PC-9 (cell line): ENCODE measurements at regions of chr2 and their contacts with region 1.

Region 1: GRCh38 chr2:42132966-42133641 is 36.0 kb upstream of the EML4 start:
- DNase-seq: peak; percentile 92 to 98
- H3K4me3 ChIP-seq: peak overlapping the region; percentile 24; the same call in 1 of the 2 replicates
- H3K27ac ChIP-seq: peak overlapping the region; percentile 69
- H3K4me1 ChIP-seq: peaks cover 74% of the 10 kb centered on the region
- H3K27me3 ChIP-seq: no peaks in the 10 kb centered on the region
- CTCF ChIP-seq: no peak

Region 2: DNA sequence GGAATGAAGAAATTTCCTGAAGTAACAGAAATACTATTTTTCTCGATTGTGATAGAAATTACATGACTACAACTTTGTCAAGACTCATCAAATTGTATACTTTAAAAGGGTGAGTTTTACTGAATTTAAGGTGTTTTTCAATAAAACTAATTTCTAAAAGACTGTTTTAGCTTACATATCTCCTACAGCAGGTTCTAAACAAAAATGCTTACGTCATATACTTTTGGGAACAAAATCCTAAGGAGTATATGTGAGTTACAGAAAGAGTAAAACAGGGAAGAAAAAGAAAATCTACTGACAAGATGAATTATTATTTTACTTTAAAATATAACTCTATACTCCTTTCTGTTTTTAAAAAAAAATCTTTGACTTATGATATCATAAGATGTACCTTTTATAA is 745.6 kb before region 1 on chr2:
- CTCF ChIA-PET with region 1: no interaction called
- POLR2A ChIA-PET with region 1: no interaction called
- intact Hi-C with region 1: no loop called
- DNase-seq: no peak
- H3K4me3 ChIP-seq: no peak overlapping the region
- H3K27ac ChIP-seq: no peak overlapping the region
- H3K4me1 ChIP-seq: no peaks in the 10 kb centered on the region
- H3K27me3 ChIP-seq: no peaks in the 10 kb centered on the region
- CTCF ChIP-seq: no peak

Region 3: DNA sequence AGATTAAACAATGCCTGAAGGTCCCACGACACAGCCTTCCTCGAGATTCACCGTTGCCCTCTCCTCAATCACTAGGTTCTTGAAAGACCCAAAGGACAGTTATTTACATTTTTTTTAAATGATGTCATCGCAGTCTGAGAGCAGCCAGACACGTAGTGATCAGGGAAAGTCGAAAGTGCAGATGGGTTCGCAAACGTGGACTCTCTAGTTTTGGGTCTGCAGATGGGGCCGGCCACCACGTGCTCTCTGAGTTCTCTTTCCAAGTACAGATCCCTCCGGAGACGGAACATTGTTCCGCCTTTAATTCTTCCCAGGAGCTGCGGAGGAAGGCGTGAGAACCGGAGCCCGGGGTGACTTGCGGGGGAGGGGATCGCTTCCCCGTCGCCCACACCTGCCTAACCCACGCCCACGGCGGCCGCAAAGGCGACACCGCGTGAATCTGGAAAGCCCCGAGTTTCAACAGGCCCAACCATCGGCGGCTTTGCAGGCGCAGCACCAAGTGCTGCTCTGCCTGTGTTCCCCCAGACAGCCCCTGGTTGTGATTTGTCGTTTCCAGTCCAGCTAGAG is 31.0 kb before region 1 on chr2:
- CTCF ChIA-PET with region 1: interaction called, 4 read pairs
- POLR2A ChIA-PET with region 1: interaction called, 9 read pairs
- intact Hi-C with region 1: loop called (anchors 2 kb)
- DNase-seq: peak; percentile 54 to 55
- H3K4me3 ChIP-seq: no peak overlapping the region
- H3K27ac ChIP-seq: no peak overlapping the region
- H3K4me1 ChIP-seq: peaks cover 34% of the 10 kb centered on the region
- H3K27me3 ChIP-seq: no peaks in the 10 kb centered on the region
- CTCF ChIP-seq: no peak

Region 4: DNA sequence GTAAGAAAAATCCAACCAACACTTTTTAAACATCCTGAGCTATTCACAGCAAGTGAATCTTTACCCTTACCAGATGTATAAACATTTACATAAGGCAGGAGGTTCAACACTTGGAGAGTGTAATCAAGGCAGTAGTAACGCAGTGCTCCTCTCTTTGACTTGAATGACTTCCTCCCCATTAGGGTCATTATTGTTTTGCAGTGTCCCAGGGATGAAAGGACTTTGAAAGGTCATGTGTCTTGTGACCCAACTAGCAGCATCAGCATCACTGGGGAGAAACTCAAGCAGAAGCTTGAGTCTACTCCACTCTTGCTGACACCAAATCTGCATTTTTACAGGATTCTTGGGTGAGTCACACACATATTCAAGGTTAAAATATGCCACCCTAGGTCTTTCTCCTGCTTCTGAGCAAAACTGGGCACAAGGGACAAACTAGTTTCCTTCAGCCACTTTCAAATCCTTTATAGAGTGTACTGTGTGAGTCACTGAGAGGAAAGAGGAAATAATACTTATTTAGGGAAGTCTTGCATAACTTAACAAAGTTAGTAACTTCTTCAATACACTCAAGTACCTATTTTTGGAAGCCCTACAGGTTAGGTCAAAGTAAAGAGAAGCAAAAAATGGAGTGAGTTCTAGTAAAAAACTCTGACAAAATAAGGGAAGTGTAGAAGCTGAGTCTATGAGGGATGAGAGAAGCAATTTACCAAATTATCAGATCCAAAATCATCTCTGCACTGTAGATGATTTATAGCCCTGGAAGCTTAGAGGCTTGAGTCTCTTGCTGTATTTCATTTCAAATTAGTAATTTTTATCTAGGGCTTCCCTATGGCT is 15.0 kb before region 1 on chr2:
- CTCF ChIA-PET with region 1: no interaction called
- POLR2A ChIA-PET with region 1: interaction called, 3 read pairs
- intact Hi-C with region 1: loop called (anchors 1 kb)
- DNase-seq: peak; percentile 57 to 100
- H3K4me3 ChIP-seq: no peak overlapping the region
- H3K27ac ChIP-seq: peak overlapping the region; percentile 79
- H3K4me1 ChIP-seq: peaks cover 43% of the 10 kb centered on the region
- H3K27me3 ChIP-seq: no peaks in the 10 kb centered on the region
- CTCF ChIP-seq: no peak

Region 5: GRCh38 chr2:42147641-42148274 is 14.7 kb after region 1 on chr2:
- CTCF ChIA-PET with region 1: no interaction called
- POLR2A ChIA-PET with region 1: interaction called, 11 read pairs
- intact Hi-C with region 1: no loop called
- DNase-seq: no peak
- H3K4me3 ChIP-seq: no peak overlapping the region
- H3K27ac ChIP-seq: no peak overlapping the region
- H3K4me1 ChIP-seq: peaks cover 9% of the 10 kb centered on the region
- H3K27me3 ChIP-seq: no peaks in the 10 kb centered on the region
- CTCF ChIP-seq: no peak

Region 6: GRCh38 chr2:42169100-42169873 is 36.2 kb after region 1 on chr2 and contains the start of gene EML4:
- CTCF ChIA-PET with region 1: no interaction called
- POLR2A ChIA-PET with region 1: interaction called, 3 read pairs
- intact Hi-C with region 1: loop called (anchors 5 kb)
- DNase-seq: peak; percentile 64 to 93
- H3K4me3 ChIP-seq: peak within 1 kb of the TSS; percentile 70
- H3K27ac ChIP-seq: 0 out of 2 replicates have a peak within 1 kb of the TSS, but pooled peaks have one; percentile 18
- H3K4me1 ChIP-seq: peaks cover 39% of the 10 kb centered on the region
- H3K27me3 ChIP-seq: no peaks in the 10 kb centered on the region
- CTCF ChIP-seq: no peak
- total RNA-seq, gene EML4: 52.0 and 64.1 TPM in 2 replicates